PC-3 (cell line): ENCODE measurements at regions of chr22 and their contacts with region 1.

Region 1: GRCh38 chr22:46087336-46088277 is 62.7 kb upstream of the PPARA start:
- DNase-seq: no peak
- ATAC-seq: peak; percentile 21
- H3K4me3 ChIP-seq: peak overlapping the region; percentile 94
- H3K27ac ChIP-seq: peak overlapping the region; percentile 99
- H3K4me1 ChIP-seq: peaks cover 68% of the 10 kb centered on the region
- H3K27me3 ChIP-seq: no peaks in the 10 kb centered on the region
- CTCF ChIP-seq: no peak

Region 2: GRCh38 chr22:46044621-46045438 is 42.8 kb before region 1 on chr22:
- CTCF ChIA-PET with region 1: no interaction called
- POLR2A ChIA-PET with region 1: no interaction called
- intact Hi-C with region 1: loop called (anchors 5 kb)
- DNase-seq: no peak
- ATAC-seq: peak; percentile 14
- H3K4me3 ChIP-seq: peak overlapping the region; percentile 81
- H3K27ac ChIP-seq: peak overlapping the region; percentile 63
- H3K4me1 ChIP-seq: peaks cover 51% of the 10 kb centered on the region
- H3K27me3 ChIP-seq: no peaks in the 10 kb centered on the region
- CTCF ChIP-seq: no peak

Region 3: DNA sequence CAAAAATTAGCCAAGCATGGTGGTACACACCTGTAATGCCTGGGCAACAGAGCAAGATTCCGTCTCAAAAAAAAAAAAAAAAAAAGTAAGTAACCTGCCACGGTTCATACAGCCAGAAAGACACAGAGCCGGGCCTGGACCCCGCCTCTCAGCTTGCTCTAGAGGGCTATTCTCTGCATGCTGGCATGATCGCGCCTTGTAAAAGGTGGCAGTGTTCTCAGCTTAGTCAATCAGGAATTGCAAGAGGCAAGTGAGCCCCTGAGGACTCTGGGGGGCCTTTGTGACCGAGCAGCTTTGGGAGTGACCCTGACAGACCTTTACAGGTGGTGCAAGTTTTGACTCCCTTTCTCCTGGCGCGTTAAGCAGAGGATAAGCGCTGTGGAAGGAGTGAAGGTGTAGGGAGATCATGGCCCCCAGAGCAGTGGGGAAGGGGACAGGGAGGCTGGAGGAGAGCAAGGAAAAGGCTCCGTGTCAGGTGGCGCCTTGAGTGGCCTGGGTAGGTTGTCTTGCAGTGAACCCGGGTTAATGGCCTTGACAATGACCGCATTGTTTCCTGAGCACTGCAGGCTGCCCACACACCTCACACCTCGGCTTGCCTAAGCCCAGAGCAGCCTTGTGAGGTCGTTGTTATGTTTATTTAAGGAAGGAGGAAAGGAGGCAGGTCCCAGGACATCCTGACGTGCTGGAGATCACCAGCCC is 113.6 kb after region 1 on chr22:
- CTCF ChIA-PET with region 1: no interaction called
- POLR2A ChIA-PET with region 1: no interaction called
- intact Hi-C with region 1: no loop called
- DNase-seq: no peak
- ATAC-seq: no peak
- H3K4me3 ChIP-seq: no peak overlapping the region
- H3K27ac ChIP-seq: no peak overlapping the region
- H3K4me1 ChIP-seq: no peaks in the 10 kb centered on the region
- H3K27me3 ChIP-seq: no peaks in the 10 kb centered on the region
- CTCF ChIP-seq: no peak

Region 4: GRCh38 chr22:46377566-46378425 is 290.2 kb after region 1 on chr22:
- CTCF ChIA-PET with region 1: no interaction called
- POLR2A ChIA-PET with region 1: no interaction called
- intact Hi-C with region 1: no loop called
- DNase-seq: peak; percentile 79
- ATAC-seq: peak; percentile 94
- H3K4me3 ChIP-seq: no peak overlapping the region
- H3K27ac ChIP-seq: 0 out of 2 replicates have a peak overlapping the region, but pooled peaks have one; percentile 9
- H3K4me1 ChIP-seq: peaks cover 11% of the 10 kb centered on the region
- H3K27me3 ChIP-seq: no peaks in the 10 kb centered on the region
- CTCF ChIP-seq: no peak